IMR-90 (cell line): ENCODE measurements at regions of chr10 and their contacts with region 1.

Region 1: DNA sequence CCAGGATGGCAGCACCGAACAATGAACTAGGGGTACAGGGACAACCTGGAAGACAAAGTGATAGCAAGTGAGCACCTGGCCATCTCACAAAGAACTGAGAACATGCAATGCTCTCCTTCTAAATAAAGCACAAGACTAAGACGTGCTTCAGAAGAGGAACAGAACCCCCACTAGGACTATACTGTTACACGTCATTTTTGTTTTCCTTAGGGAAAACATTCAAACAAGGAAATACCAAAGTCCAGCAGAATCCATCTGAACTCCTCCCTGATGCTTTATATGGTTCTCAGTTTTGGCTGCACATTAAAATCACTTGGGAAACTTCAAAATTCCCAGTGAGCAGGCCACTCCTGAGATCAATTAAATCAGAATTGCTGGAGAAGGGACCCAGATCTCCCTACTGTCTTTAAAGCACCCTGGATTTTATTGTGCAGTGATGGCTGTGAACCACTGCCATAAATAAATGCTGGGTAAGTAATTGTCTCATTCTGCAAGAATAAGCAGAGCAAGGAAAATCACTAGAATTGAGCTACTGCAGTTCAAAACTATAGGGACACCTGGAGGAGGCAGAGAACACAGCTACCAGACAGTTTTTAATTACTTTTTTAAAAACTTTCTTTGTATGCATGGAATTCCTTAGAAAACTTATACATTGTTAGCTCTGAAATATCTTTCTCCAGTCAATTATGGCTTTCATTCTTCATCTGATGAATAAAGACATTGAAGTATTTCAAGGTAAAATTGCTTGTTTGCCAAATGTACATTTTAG is 866.5 kb upstream of the GHITM start:
- DNase-seq: no peak
- ATAC-seq: no peak
- H3K4me3 ChIP-seq: no peak overlapping the region
- H3K27ac ChIP-seq: no peak overlapping the region
- H3K4me1 ChIP-seq: no peaks in the 10 kb centered on the region
- H3K27me3 ChIP-seq: no peaks in the 10 kb centered on the region
- CTCF ChIP-seq: no peak
- POLR2A ChIP-seq: no peak
- RAD21 ChIP-seq: no peak

Region 2: DNA sequence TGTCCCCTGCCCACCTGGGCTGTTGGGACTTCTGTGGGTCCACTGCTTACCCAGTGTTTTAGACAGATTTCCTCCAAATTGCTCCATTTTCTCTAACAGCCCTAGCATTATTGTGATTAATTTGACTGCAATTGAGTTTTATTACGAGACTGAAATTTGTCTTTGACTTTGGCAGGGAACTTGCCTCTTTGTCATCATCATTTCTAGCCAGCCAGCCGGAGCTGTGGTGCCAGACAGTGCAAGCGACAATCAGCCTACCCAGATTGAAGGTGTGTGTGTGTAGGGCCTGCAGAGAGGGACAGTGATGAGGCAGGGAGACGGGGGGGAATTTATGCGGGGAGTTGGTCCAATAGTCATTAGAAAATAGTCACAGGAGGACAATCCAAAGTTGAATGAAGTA is 654.8 kb before region 1 on chr10:
- CTCF ChIA-PET with region 1: no interaction called
- POLR2A ChIA-PET with region 1: no interaction called
- dilution Hi-C with region 1: no loop called
- in situ Hi-C with region 1: no loop called
- intact Hi-C with region 1: loop called (anchors 5 kb)
- DNase-seq: no peak
- ATAC-seq: no peak
- H3K4me3 ChIP-seq: no peak overlapping the region
- H3K27ac ChIP-seq: no peak overlapping the region
- H3K4me1 ChIP-seq: no peaks in the 10 kb centered on the region
- H3K27me3 ChIP-seq: no peaks in the 10 kb centered on the region
- CTCF ChIP-seq: no peak
- POLR2A ChIP-seq: no peak
- RAD21 ChIP-seq: no peak

Region 3: GRCh38 chr10:83229991-83230390 is 42.9 kb before region 1 on chr10:
- CTCF ChIA-PET with region 1: no interaction called
- POLR2A ChIA-PET with region 1: no interaction called
- dilution Hi-C with region 1: no loop called
- in situ Hi-C with region 1: no loop called
- intact Hi-C with region 1: no loop called
- DNase-seq: no peak
- ATAC-seq: no peak
- H3K4me3 ChIP-seq: no peak overlapping the region
- H3K27ac ChIP-seq: no peak overlapping the region
- H3K4me1 ChIP-seq: no peaks in the 10 kb centered on the region
- H3K27me3 ChIP-seq: no peaks in the 10 kb centered on the region
- CTCF ChIP-seq: no peak
- POLR2A ChIP-seq: no peak
- RAD21 ChIP-seq: no peak

Region 4: DNA sequence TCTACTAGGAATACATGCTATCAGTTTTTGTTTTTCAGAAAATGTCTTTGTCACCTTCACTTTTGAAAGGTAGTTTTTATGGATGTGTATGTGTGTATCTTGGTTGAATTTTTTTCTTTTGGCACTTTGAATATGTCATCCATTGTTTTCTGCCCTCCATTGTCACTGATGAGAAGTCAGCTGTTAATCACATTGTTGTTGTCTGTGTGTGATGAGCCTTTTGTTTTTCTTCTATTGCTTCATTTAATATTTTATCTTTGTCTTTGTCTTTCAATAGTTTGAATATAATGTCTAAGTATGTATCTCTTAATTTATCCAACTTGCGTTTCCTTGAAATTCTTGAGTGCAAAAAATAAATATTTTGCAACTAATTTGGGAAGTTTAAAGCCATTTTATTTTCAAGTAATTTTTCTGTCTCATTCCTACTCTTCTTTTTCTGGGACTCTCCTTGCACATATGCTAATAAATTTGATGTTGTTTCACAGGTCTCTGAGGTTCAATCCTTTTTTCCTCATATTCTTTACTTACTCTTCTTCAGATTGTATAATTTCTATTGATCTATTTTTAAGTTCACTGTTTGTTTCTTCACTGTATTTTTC is 319.6 kb after region 1 on chr10:
- CTCF ChIA-PET with region 1: no interaction called
- POLR2A ChIA-PET with region 1: no interaction called
- dilution Hi-C with region 1: no loop called
- in situ Hi-C with region 1: no loop called
- intact Hi-C with region 1: no loop called
- DNase-seq: no peak
- ATAC-seq: no peak
- H3K4me3 ChIP-seq: no peak overlapping the region
- H3K27ac ChIP-seq: no peak overlapping the region
- H3K4me1 ChIP-seq: no peaks in the 10 kb centered on the region
- H3K27me3 ChIP-seq: no peaks in the 10 kb centered on the region
- CTCF ChIP-seq: no peak
- POLR2A ChIP-seq: no peak
- RAD21 ChIP-seq: no peak